HEK293 (cell line): ENCODE measurements at regions of chr2 and their contacts with region 1.

Region 1: GRCh38 chr2:26959331-26959730 is 11.1 kb upstream of the MAPRE3 start:
- H3K4me3 ChIP-seq: no peak overlapping the region
- H3K27ac ChIP-seq: no peak overlapping the region
- H3K4me1 ChIP-seq: peaks cover 5% of the 10 kb centered on the region; the same call in 1 of the 2 replicates
- CTCF ChIP-seq: no peak

Region 2: DNA sequence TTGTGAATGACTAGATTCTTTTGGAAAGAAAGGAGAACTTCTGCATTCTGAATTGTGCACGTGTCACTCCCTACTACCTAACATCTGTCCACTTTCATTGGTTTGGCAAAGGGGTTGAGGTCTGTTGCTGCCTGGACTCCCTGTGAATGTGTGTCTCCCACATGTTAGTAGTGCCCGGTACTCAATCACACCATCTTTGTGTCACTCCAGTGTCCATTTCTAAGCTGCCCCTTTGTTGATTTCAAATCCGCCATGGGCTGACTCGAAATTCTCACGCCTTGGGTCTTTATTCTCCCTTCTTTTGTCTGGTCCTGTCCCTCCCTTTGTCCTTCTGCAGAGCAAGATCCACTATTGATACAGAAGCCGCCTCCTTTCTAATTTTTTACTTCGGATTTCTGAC is 103.9 kb before region 1 on chr2:
- CTCF ChIA-PET with region 1: no interaction called
- POLR2A ChIA-PET with region 1: no interaction called
- H3K4me3 ChIP-seq: no peak overlapping the region
- H3K27ac ChIP-seq: no peak overlapping the region
- H3K4me1 ChIP-seq: peaks cover 6% of the 10 kb centered on the region
- CTCF ChIP-seq: no peak

Region 3: GRCh38 chr2:26982102-26982742 is 22.9 kb after region 1 on chr2:
- CTCF ChIA-PET with region 1: interaction called, 11 read pairs
- POLR2A ChIA-PET with region 1: interaction called, 3 read pairs
- H3K4me3 ChIP-seq: no peak overlapping the region
- H3K27ac ChIP-seq: no peak overlapping the region
- H3K4me1 ChIP-seq: peaks cover 5% of the 10 kb centered on the region; the same call in 1 of the 2 replicates
- CTCF ChIP-seq: 0 out of 2 replicates have a peak, but pooled peaks have one; percentile 23

Region 4: DNA sequence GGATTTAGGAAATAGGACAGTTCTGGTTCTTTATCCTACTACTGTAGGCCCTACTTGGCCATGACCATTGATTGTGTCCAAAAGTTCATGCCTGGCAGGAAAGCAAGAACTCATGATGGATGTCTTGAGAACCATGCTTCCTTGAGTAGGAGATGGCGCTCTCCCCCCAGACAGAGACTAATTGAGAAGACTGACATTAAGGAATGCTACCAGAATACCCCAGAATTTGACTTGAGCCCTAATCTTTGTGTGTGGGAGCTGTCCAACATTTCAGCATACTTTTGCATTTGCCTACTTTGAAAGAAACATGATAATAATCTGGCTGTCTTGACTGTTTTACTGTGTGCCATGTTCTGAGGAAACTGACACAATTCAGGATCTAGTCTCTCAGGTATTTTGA is 34.4 kb after region 1 on chr2:
- CTCF ChIA-PET with region 1: interaction called, 13 read pairs
- POLR2A ChIA-PET with region 1: no interaction called
- H3K4me3 ChIP-seq: no peak overlapping the region
- H3K27ac ChIP-seq: no peak overlapping the region
- H3K4me1 ChIP-seq: no peaks in the 10 kb centered on the region
- CTCF ChIP-seq: no peak

Region 5: GRCh38 chr2:27086090-27086723 is 126.9 kb after region 1 on chr2:
- CTCF ChIA-PET with region 1: interaction called, 11 read pairs
- POLR2A ChIA-PET with region 1: interaction called, 5 read pairs
- H3K4me3 ChIP-seq: peak overlapping the region; percentile 46
- H3K27ac ChIP-seq: peak overlapping the region; percentile 72
- H3K4me1 ChIP-seq: peaks cover 8% of the 10 kb centered on the region
- CTCF ChIP-seq: peak; percentile 71

Region 6: GRCh38 chr2:27095745-27096651 is 136.7 kb after region 1 on chr2:
- CTCF ChIA-PET with region 1: interaction called, 13 read pairs
- POLR2A ChIA-PET with region 1: no interaction called
- H3K4me3 ChIP-seq: no peak overlapping the region
- H3K27ac ChIP-seq: 0 out of 2 replicates have a peak overlapping the region, but pooled peaks have one; percentile 8
- H3K4me1 ChIP-seq: no peaks in the 10 kb centered on the region
- CTCF ChIP-seq: no peak

Region 7: DNA sequence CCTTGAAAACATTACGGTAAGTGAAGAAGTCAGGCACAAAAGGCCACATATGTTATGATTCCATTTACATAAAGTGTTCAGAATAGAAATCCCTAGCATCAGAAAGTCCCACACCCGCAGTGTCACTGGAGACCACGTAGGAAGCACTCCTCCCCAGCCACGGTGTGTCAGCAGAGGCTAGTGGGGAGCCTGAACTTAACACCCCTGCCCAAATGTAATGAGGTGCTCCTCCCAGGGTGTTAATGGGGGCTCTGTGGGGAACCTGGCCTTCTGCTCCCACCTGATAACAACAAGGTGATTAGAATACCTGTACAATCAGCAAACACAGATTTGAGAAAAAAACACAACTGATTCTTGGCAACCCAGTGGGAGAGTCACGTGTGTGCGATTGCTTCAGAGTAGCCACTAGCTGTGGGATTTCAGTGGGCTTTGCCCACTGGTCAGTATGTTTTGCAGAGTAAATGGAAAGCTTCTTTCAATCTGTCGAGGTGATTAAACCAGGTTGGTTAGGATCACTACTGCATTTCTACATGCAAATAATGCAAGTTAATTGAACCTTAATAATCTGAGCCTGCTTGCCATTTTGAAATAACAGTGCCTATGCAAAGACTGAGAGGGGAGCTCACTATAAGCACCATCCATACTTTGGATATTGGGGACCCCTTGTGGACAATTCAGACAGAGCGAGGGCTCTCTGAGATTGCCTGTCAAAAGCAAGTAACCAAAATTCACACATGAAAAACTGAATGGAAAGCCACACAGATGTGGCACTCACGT is 231.9 kb after region 1 on chr2:
- CTCF ChIA-PET with region 1: interaction called, 11 read pairs
- POLR2A ChIA-PET with region 1: no interaction called
- H3K4me3 ChIP-seq: no peak overlapping the region
- H3K27ac ChIP-seq: no peak overlapping the region
- H3K4me1 ChIP-seq: peaks cover 3% of the 10 kb centered on the region; the same call in 1 of the 2 replicates
- CTCF ChIP-seq: peak; percentile 56; the same call in 1 of the 2 replicates